ENCODE measurements at regions of chrX and their contacts with region 1.

Region 1: DNA sequence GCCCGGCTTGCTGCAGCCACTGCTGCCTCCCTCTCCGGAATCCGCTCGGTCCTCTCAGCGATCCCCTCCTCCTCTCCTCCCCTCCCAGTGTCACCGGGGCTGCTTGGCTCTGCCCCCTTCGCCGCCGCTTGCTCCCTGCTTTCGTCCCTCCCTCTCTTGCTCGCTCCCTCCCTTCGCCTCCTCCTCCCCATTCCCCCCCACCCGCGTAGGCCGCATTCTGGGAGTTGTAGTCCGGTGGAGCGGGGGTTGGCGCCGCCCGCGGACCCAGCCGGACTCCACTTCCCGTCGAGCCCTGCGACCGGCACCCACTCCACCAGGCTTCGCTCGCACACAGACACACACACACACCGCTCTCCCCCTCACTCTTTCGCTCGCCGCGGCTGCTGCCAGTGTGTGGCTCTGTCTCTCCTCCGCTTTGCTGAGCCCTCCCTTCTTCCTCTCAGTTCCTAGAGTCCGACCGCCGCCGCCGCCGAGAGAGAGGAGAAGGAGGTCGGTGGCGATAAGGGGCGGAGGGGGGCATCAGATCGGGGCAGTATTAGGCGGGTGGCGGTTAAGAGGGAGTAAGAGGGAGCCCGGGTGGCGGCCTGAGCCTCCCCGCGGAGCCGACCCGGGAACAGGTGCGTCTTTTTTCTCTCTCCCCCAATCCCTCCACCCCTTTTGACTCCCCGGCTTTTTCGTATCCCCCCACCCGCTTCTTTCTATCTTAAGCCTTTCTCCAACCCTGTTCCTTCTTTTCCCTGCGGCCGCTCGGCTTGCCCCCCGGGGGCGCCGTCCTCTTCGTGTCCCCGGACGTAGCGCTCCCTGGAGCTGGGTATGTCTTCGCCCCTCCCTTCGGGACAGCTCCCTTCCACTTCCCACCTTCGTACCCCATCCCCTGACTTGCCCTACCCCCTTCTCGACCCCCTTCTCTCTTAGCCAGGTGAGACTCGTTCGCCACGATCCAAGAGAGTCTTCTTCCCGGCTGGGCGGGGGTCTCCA is at the start of gene BCORL1:
- DNase-seq: peak; percentile 79
- H3K4me3 ChIP-seq: peak within 1 kb of the TSS; percentile 59
- H3K27ac ChIP-seq: no peak within 1 kb of the TSS
- H3K27me3 ChIP-seq: no peaks in the 10 kb centered on the region
- CTCF ChIP-seq: no peak
- polyA plus RNA-seq, gene BCORL1: 1.0 and 1.7 TPM in 2 replicates

Region 2: GRCh38 chrX:129965166-129965565 is 17.4 kb before region 1 on chrX:
- CTCF ChIA-PET with region 1: no interaction called
- POLR2A ChIA-PET with region 1: interaction called, 14 read pairs
- DNase-seq: no peak
- H3K4me3 ChIP-seq: no peak overlapping the region
- H3K27ac ChIP-seq: no peak overlapping the region
- H3K27me3 ChIP-seq: no peaks in the 10 kb centered on the region
- CTCF ChIP-seq: no peak

Region 3: GRCh38 chrX:130039847-130040246 is 57.3 kb after region 1 on chrX:
- CTCF ChIA-PET with region 1: no interaction called
- POLR2A ChIA-PET with region 1: interaction called, 11 read pairs
- DNase-seq: no peak
- H3K4me3 ChIP-seq: no peak overlapping the region
- H3K27ac ChIP-seq: no peak overlapping the region
- H3K27me3 ChIP-seq: no peaks in the 10 kb centered on the region
- CTCF ChIP-seq: no peak

Measured in AG04450 (cell line).